CD8-positive, alpha-beta T cell (primary cell): ENCODE measurements at regions of chr3 and their contacts with region 1.

Region 1: DNA sequence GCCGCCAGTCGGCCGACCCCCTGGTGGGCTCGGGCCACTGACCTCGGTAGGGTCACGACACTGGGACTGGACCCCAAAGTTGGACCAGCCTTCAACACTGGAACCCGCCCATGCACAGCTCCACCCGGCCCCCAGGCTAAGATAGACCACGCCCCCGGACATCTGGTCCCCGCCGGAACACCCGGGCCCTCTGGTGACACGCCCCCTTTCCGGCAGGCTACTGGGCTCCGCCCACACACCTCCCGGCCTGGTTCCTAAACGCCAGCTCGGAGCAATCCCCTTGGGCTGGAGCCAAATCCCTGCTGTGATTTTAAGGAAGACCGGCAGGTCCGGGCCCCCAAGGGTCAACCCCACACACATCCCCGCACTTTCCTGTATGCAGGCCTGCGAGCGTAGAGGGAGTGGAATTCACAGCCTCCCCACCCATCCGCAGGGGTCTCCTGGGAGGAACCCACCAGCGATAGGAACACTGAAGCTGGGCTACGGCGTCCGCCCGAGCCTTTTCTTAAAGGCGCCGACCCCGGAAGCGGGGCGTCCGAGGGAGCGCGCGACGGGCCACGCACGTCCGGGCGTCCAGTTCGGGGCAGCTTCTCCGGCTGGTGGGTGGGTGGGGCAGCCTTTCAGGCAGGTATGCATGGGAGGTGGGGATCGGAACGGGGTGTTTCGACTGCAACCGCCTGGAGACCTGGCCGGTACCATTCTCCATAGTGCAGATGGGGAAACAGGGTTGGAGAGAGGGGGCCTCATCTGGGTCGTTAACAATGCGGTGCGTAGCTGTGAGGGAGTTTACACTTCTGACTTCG is at the start of gene HEMK1:
- DNase-seq: peak; percentile 83 to 96 (median 94)
- ATAC-seq: peak; percentile 70
- H3K4me3 ChIP-seq: peak within 1 kb of the TSS; percentile 89 to 94
- H3K4me3 Mint-ChIP-seq: peak within 1 kb of the TSS; percentile 94
- H3K27ac ChIP-seq: peak within 1 kb of the TSS; percentile 83 to 89
- H3K27ac Mint-ChIP-seq: peak within 1 kb of the TSS; percentile 97
- H3K4me1 ChIP-seq: peaks cover 68% of the 10 kb centered on the region
- H3K4me1 Mint-ChIP-seq: peaks cover 67% of the 10 kb centered on the region
- H3K27me3 ChIP-seq: no peaks in the 10 kb centered on the region
- H3K27me3 Mint-ChIP-seq: no peaks in the 10 kb centered on the region
- CTCF ChIP-seq: no peak
- total RNA-seq, gene HEMK1: 11.1 to 12.5 TPM

Region 2: GRCh38 chr3:50068134-50068533 is 501.0 kb before region 1 on chr3:
- CTCF ChIA-PET with region 1: no interaction called
- POLR2A ChIA-PET with region 1: no interaction called
- intact Hi-C with region 1: no loop called
- DNase-seq: no peak
- ATAC-seq: no peak
- H3K4me3 ChIP-seq: no peak overlapping the region
- H3K4me3 Mint-ChIP-seq: no peak overlapping the region
- H3K27ac ChIP-seq: no peak overlapping the region
- H3K27ac Mint-ChIP-seq: no peak overlapping the region
- H3K4me1 ChIP-seq: no peaks in the 10 kb centered on the region
- H3K4me1 Mint-ChIP-seq: no peaks in the 10 kb centered on the region
- H3K27me3 ChIP-seq: no peaks in the 10 kb centered on the region
- H3K27me3 Mint-ChIP-seq: no peaks in the 10 kb centered on the region
- CTCF ChIP-seq: no peak

Region 3: DNA sequence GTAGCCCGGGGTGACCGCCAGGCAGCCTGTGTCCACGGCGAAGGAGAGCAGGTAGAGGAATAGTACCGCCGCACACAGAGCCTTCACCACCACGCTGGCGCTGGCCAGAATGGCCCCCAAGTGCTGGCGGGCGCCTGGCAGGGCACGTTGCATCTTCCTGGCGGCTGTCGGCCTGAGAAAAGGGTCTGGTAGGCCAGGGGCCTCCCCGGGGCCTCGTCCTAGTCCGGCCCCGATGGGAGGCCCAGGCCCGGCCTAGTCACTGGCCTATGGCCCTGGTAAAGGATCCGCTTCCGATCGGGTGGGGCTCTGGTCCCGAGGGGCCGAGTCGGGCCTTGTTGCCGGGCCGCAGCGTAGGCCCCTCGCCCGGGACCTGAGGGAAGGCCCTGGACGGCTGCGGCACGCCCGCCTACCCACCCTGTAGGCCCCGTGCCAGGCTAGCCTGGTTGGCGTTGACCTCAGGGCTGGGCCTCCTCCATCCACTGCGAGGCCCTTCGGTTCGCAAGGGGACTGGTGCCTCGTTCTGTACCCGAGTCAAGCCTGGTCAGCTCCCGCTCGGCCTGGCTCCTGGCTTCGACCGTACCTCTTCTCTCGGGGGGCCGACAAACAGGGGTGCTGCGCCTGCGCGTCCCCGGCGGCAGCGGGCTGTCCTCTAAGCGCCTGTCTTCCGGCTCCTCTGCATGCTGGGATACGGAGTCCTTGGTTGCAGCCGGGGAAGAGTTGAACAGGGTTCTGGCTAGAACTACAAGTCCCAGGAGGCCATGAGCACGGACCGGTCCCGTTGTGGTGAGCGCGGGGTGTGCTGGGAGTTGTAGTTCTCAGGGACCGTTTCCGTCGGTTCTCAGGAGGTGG is 210.0 kb before region 1 on chr3 and contains the start of gene TMEM115:
- CTCF ChIA-PET with region 1: no interaction called
- POLR2A ChIA-PET with region 1: interaction called, 3 read pairs
- intact Hi-C with region 1: loop called in 1 of 2 experiments (anchors 2 kb)
- DNase-seq: peak; percentile 87 to 99 (median 94)
- ATAC-seq: peak; percentile 100
- H3K4me3 ChIP-seq: peak within 1 kb of the TSS; percentile 58 to 76
- H3K4me3 Mint-ChIP-seq: peak within 1 kb of the TSS; percentile 97
- H3K27ac ChIP-seq: peak within 1 kb of the TSS; percentile 58 to 86
- H3K27ac Mint-ChIP-seq: peak within 1 kb of the TSS; percentile 97
- H3K4me1 ChIP-seq: peaks cover 33% of the 10 kb centered on the region
- H3K4me1 Mint-ChIP-seq: peaks cover 52% of the 10 kb centered on the region
- H3K27me3 ChIP-seq: no peaks in the 10 kb centered on the region
- H3K27me3 Mint-ChIP-seq: no peaks in the 10 kb centered on the region
- CTCF ChIP-seq: no peak
- total RNA-seq, gene TMEM115: 15.2 to 17.8 TPM

Region 4: DNA sequence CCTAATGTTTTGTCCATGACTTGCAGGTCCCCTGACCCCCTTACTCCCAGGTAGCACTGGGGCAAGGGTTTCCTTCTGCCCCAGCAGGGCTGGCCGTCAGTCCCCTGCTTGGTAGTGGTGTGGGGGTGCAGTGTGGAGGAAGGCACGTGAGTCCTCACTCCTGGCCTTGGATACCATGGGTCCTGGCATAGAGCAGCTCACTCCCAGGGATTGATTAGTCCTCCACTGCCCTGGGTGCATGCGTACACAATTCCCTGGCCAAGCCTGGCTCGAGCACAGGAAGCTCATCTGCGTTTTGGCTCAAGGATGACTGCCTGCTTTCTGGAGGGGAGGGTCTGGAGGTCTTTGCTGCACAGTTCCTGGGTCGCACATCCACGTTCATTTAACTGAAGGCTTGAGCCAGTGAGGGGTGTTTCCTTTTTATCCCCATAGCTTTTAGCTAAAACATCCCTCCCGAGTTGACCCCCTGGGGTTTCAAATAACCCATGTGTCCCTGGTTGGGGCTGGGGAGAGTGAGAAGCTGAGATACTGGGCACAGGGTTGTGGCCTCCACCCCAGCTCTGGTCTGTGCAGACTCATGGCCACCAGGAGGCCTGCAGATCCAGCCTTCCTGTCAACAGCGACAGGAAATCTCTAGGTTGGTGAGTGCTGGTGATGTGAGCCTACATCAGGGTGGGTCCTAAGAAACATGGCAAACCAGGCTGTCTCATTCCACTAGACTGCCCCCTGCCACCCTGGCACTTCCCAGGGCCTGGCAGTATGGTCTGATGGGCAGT is 11.7 kb after region 1 on chr3:
- CTCF ChIA-PET with region 1: interaction called, 153 read pairs
- POLR2A ChIA-PET with region 1: interaction called, 4 read pairs
- intact Hi-C with region 1: no loop called
- DNase-seq: no peak
- ATAC-seq: peak; percentile 55
- H3K4me3 ChIP-seq: no peak overlapping the region
- H3K4me3 Mint-ChIP-seq: no peak overlapping the region
- H3K27ac ChIP-seq: no peak overlapping the region
- H3K27ac Mint-ChIP-seq: peak overlapping the region; percentile 41
- H3K4me1 ChIP-seq: peaks cover 47% of the 10 kb centered on the region
- H3K4me1 Mint-ChIP-seq: peaks cover 32% of the 10 kb centered on the region
- H3K27me3 ChIP-seq: no peaks in the 10 kb centered on the region
- H3K27me3 Mint-ChIP-seq: no peaks in the 10 kb centered on the region
- CTCF ChIP-seq: no peak

Region 5: GRCh38 chr3:50971487-50971924 is 402.4 kb after region 1 on chr3:
- CTCF ChIA-PET with region 1: no interaction called
- POLR2A ChIA-PET with region 1: no interaction called
- intact Hi-C with region 1: loop called in 1 of 2 experiments (anchors 2 kb)
- DNase-seq: peak; percentile 6 to 85 (median 55)
- ATAC-seq: peak; percentile 98
- H3K4me3 ChIP-seq: no peak overlapping the region
- H3K4me3 Mint-ChIP-seq: no peak overlapping the region
- H3K27ac ChIP-seq: peak overlapping the region in 1 of 2 experiments; percentile 49
- H3K27ac Mint-ChIP-seq: peak overlapping the region; percentile 41
- H3K4me1 ChIP-seq: peaks cover 10% of the 10 kb centered on the region
- H3K4me1 Mint-ChIP-seq: peaks cover 15% of the 10 kb centered on the region
- H3K27me3 ChIP-seq: no peaks in the 10 kb centered on the region
- H3K27me3 Mint-ChIP-seq: no peaks in the 10 kb centered on the region
- CTCF ChIP-seq: peak; percentile 84

Region 6: GRCh38 chr3:51384726-51385473 is 815.8 kb after region 1 on chr3 and contains the start of gene MANF:
- CTCF ChIA-PET with region 1: interaction called, 4 read pairs
- POLR2A ChIA-PET with region 1: interaction called, 8 read pairs
- intact Hi-C with region 1: loop called (anchors 1 to 2 kb)
- DNase-seq: peak; percentile 94 to 99 (median 97)
- ATAC-seq: peak; percentile 93
- H3K4me3 ChIP-seq: peak within 1 kb of the TSS; percentile 86 to 94
- H3K4me3 Mint-ChIP-seq: peak within 1 kb of the TSS; percentile 99
- H3K27ac ChIP-seq: peak within 1 kb of the TSS; percentile 90 to 93
- H3K27ac Mint-ChIP-seq: peak within 1 kb of the TSS; percentile 100
- H3K4me1 ChIP-seq: peaks cover 35% of the 10 kb centered on the region
- H3K4me1 Mint-ChIP-seq: peaks cover 44% of the 10 kb centered on the region
- H3K27me3 ChIP-seq: no peaks in the 10 kb centered on the region
- H3K27me3 Mint-ChIP-seq: no peaks in the 10 kb centered on the region
- CTCF ChIP-seq: no peak
- total RNA-seq, gene MANF: 32.2 to 35.0 TPM

Region 7: DNA sequence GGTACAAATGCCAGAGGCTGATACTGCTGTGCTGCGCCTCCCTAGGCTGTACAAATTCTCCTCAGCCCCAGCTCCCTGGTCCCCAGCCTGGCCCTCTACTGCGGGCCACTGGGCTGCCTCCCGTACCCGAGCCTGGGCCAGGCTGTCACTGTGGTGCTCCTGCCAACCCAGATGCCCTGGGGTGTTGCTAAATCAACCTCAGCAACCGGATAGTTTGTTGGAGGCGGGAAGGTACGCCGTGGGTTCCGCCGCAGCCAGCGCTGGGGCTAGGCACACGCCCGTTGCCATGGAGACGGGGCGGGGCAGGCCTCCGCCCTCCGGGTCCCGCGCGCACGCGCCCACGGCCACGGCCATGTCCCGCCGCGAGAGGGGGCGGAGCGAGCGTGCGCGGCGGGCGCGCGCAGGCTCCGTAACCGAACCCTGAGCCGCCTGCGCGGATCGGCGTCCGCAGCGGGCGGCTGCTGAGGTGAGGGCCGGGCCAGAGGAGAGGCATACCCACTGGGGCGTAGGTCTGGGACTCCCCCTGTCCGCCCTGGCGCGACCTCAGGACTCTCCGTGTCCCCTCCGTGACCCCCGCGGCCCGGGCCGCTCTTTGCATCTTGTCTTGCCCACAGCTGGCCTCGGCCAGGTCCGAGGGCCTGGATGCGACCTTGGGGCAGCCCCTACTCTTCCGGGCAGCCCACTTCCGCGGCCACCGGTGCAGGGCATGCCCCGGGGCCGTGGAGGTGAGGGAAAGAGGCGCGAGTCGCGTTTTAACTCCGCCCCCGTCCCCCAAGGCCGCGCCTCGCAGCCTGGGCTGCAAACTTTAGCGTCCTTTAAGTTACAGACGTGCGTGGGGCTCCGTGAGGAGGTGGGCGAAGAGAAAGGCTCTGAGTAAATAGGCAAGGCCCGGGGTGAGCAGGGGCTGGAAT is 1101.9 kb after region 1 on chr3 and contains the start of gene TEX264:
- CTCF ChIA-PET with region 1: no interaction called
- POLR2A ChIA-PET with region 1: no interaction called
- intact Hi-C with region 1: loop called in 1 of 2 experiments (anchors 5 kb)
- DNase-seq: peak; percentile 85 to 99 (median 95)
- ATAC-seq: peak; percentile 78
- H3K4me3 ChIP-seq: peak within 1 kb of the TSS; percentile 95 to 99
- H3K4me3 Mint-ChIP-seq: peak within 1 kb of the TSS; percentile 89
- H3K27ac ChIP-seq: peak within 1 kb of the TSS; percentile 67 to 92
- H3K27ac Mint-ChIP-seq: peak within 1 kb of the TSS; percentile 88
- H3K4me1 ChIP-seq: peaks cover 58% of the 10 kb centered on the region
- H3K4me1 Mint-ChIP-seq: peaks cover 63% of the 10 kb centered on the region
- H3K27me3 ChIP-seq: no peaks in the 10 kb centered on the region
- H3K27me3 Mint-ChIP-seq: no peaks in the 10 kb centered on the region
- CTCF ChIP-seq: no peak
- total RNA-seq, gene TEX264: 18.7 to 21.0 TPM